Mammary epithelial cell (primary cell): ENCODE measurements at regions of chr9 and their contacts with region 1.

Region 1: GRCh38 chr9:33225319-33226149 is 14.4 kb upstream of the SPINK4 start:
- DNase-seq: peak; percentile 63
- H3K4me3 ChIP-seq: no peak overlapping the region
- H3K27ac ChIP-seq: no peak overlapping the region
- H3K4me1 ChIP-seq: peaks cover 49% of the 10 kb centered on the region
- H3K27me3 ChIP-seq: no peaks in the 10 kb centered on the region
- CTCF ChIP-seq: peak; percentile 60 to 61

Region 2: DNA sequence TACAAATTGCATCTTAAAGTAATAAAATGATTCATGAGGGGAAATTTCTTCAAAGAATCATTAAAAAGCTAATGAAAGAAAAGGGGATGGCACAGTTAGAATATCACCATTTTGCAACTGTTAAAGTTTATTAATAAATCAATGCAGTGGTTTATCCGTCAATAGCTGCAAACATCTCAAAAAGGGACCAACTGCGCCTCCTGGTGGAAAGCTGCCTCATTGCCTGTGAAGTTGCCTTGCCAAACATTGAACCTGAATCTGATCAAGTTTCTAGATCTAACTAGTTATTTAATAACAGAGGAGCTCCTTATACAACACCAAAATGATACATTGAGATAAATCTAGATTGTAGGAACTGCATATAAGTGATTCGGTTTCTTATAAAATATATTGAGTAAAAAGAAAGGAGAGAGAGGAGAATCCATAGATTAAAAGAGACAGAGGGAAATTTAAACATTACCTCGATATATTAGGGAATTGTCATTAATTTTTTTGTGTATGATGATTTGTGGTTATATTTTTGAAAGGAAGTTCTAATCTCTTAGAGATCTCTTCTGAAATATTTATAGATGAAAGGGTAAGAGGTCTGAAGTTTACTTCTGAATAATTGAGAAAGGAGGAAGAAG is 645.7 kb before region 1 on chr9:
- CTCF ChIA-PET with region 1: no interaction called
- dilution Hi-C with region 1: no loop called
- in situ Hi-C with region 1: no loop called
- intact Hi-C with region 1: loop called (anchors 10 kb)
- DNase-seq: peak; percentile 25
- H3K4me3 ChIP-seq: no peak overlapping the region
- H3K27ac ChIP-seq: no peak overlapping the region
- H3K4me1 ChIP-seq: no peaks in the 10 kb centered on the region
- H3K27me3 ChIP-seq: no peaks in the 10 kb centered on the region
- CTCF ChIP-seq: peak; percentile 93 to 96

Region 3: DNA sequence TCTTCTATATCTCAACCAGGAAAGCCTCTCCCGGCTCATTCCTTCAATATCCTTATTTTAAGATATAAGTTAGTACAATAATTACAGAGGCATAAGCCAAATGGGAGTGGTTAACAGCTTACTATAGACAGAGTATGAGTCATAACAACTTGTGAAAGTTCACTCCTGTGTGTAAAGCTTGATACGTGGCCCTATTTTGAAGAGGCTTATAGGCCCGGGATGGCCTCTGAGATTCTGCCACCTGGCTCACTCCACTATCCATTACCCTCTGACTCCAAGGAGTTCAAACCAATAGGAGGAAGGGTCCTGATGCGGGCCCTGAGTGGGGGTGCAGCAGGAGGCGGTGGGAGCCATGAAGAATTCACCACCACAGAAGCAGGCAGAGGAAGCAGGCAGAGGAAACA is 95.0 kb before region 1 on chr9:
- CTCF ChIA-PET with region 1: no interaction called
- dilution Hi-C with region 1: no loop called
- in situ Hi-C with region 1: no loop called
- intact Hi-C with region 1: loop called (anchors 5 kb)
- DNase-seq: peak; percentile 53
- H3K4me3 ChIP-seq: no peak overlapping the region
- H3K27ac ChIP-seq: peak overlapping the region; percentile 14
- H3K4me1 ChIP-seq: peaks cover 28% of the 10 kb centered on the region
- H3K27me3 ChIP-seq: no peaks in the 10 kb centered on the region
- CTCF ChIP-seq: no peak

Region 4: GRCh38 chr9:33264473-33265177 is 39.1 kb after region 1 on chr9 and contains the starts of genes BAG1 and CHMP5:
- CTCF ChIA-PET with region 1: no interaction called
- dilution Hi-C with region 1: no loop called
- in situ Hi-C with region 1: no loop called
- intact Hi-C with region 1: loop called (anchors 1 kb)
- DNase-seq: peak; percentile 99
- H3K4me3 ChIP-seq: peak within 1 kb of the TSS; percentile 89 to 97 (median 96)
- H3K27ac ChIP-seq: peak within 1 kb of the TSS; percentile 87
- H3K4me1 ChIP-seq: peaks cover 17% of the 10 kb centered on the region
- H3K27me3 ChIP-seq: no peaks in the 10 kb centered on the region
- CTCF ChIP-seq: peak; percentile 11 to 45
- total RNA-seq, gene BAG1: 28.5 to 30.9 TPM
- total RNA-seq, gene CHMP5: 52.7 to 54.0 TPM

Region 5: GRCh38 chr9:33466565-33467495 is 241.3 kb after region 1 on chr9:
- CTCF ChIA-PET with region 1: no interaction called
- dilution Hi-C with region 1: no loop called
- in situ Hi-C with region 1: loop called in 1 of 2 experiments (anchors 25 kb)
- intact Hi-C with region 1: loop called (anchors 1 kb)
- DNase-seq: no peak
- H3K4me3 ChIP-seq: no peak overlapping the region
- H3K27ac ChIP-seq: no peak overlapping the region
- H3K4me1 ChIP-seq: peaks cover 17% of the 10 kb centered on the region
- H3K27me3 ChIP-seq: no peaks in the 10 kb centered on the region
- CTCF ChIP-seq: peak; percentile 98

Region 6: GRCh38 chr9:33721674-33722358 is 496.3 kb after region 1 on chr9:
- CTCF ChIA-PET with region 1: no interaction called
- dilution Hi-C with region 1: no loop called
- in situ Hi-C with region 1: no loop called
- intact Hi-C with region 1: loop called (anchors 1 kb)
- DNase-seq: peak; percentile 65
- H3K4me3 ChIP-seq: no peak overlapping the region
- H3K27ac ChIP-seq: no peak overlapping the region
- H3K4me1 ChIP-seq: no peaks in the 10 kb centered on the region
- H3K27me3 ChIP-seq: no peaks in the 10 kb centered on the region
- CTCF ChIP-seq: peak; percentile 99 to 100